Activated CD4-positive, alpha-beta T cell treated with anti-CD3 and anti-CD28 coated beads, Interleukin-2, amount 10 ng/mL, durations not matched to agents 24 days and 14 days (primary cell): ENCODE measurements at regions of chr19 and their contacts with region 1.

Region 1: DNA sequence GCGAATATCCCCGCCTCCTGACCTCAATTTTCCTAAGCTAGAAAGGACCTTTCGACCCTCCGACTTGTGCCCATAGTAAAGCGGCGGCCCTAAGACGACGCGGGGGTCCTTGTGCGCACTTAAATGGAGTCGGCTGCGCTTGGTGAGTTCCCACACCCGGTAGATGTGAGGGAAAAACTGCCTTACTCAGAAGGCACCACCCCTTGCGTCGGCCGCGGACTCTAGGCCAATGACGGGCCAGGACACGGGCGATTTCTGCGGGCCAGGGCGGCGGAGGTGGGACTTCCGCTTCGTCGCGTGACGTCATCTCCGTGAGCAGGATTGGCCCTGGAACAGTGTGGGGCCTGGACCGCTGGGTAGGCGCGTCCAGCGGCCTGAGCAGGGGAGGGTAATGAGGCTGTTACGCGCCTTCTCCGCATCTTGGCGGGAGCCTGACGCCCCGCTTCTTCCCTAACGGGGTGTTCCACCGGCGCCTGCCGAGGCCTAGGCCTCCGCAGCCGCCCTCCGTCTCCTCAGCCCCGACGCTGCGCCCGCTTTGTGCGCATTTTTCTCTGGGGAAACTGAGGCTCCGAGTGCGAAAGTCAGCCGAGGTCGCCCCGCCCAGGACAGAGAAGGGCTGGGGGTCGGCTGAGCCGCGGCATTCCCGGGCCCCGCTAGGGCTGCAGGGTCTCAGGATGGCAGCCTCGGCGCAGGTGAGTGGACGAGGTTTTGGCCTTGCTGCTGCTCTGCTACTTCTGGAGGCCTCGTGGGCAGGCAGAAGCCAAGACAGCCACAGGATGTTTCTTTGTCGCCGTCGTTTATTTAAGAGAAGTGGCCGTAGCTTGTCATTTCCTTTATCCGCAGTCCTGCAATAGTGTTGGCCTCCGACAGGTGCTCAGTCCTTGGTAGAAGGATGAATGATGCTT is at the start of gene ZNF543:
- DNase-seq: peak; percentile 98
- H3K4me3 Mint-ChIP-seq: peak within 1 kb of the TSS; percentile 95
- H3K27ac Mint-ChIP-seq: peak within 1 kb of the TSS; percentile 94
- H3K4me1 Mint-ChIP-seq: peaks cover 24% of the 10 kb centered on the region
- H3K27me3 Mint-ChIP-seq: peaks cover 14% of the 10 kb centered on the region
- total RNA-seq, gene ZNF543: 4.9 and 5.3 TPM in 2 replicates

Region 2: GRCh38 chr19:57191141-57192076 is 129.0 kb before region 1 on chr19 and contains the start of gene ZNF264:
- intact Hi-C with region 1: loop called (anchors 2 kb)
- DNase-seq: peak; percentile 97
- H3K4me3 Mint-ChIP-seq: peak within 1 kb of the TSS; percentile 93
- H3K27ac Mint-ChIP-seq: peak within 1 kb of the TSS; percentile 85
- H3K4me1 Mint-ChIP-seq: peaks cover 20% of the 10 kb centered on the region
- H3K27me3 Mint-ChIP-seq: no peaks in the 10 kb centered on the region
- total RNA-seq, gene ZNF264: 18.0 and 19.9 TPM in 2 replicates

Region 3: DNA sequence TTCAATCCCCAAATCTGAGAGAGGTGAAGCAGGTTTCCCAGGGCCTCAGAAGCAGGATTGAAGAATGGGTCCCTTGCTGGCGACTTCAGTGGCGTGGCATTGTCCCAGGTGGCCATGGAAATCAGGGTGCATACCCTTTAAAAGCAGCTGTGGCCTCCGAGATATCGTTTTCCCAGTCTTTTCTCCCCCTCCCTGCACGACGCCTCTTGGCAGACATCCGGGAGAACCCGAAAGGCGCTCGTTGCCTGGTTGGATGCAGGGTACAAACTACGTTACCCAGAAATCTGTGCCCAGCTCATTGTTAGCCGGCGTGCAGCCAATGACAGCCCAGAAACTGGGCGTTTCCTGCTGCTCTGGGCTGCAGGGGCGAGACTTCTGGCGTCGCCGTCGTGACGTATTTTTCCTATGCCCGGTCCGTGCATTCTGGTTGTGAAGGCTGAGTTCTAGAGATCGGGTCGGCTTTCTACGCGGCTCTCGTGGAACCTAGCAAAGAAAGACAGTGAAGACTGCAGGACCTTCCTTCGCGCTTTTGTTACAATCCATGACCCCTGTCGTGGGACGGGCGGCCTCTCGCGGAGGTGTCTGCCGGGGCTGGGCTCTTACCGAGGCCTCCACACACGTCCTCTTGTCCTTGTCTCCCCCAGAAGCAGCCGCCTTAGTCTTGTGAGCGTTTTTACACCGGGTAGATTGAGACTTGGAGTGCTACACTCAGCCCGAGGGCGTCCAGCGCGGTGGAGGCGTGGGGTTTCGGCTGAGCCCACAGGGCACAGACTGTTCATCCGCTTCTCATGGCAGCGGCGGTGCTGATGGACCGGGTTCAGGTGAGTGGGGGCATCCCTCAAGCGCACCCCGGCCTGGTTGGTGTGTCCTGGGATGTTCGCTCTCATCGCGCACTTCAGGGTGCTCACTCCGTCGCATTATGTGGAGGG is 30.7 kb after region 1 on chr19 and contains the start of gene ZNF304:
- intact Hi-C with region 1: loop called (anchors 1 kb)
- DNase-seq: peak; percentile 96
- H3K4me3 Mint-ChIP-seq: peak within 1 kb of the TSS; percentile 93
- H3K27ac Mint-ChIP-seq: peak within 1 kb of the TSS; percentile 91
- H3K4me1 Mint-ChIP-seq: peaks cover 29% of the 10 kb centered on the region
- H3K27me3 Mint-ChIP-seq: no peaks in the 10 kb centered on the region
- total RNA-seq, gene ZNF304: 5.3 and 5.8 TPM in 2 replicates